Endothelial cell of umbilical vein (primary cell): ENCODE measurements at regions of chr5 and their contacts with region 1.

Region 1: GRCh38 chr5:32613050-32613672 is 27.8 kb downstream of the SUB1 start:
- DNase-seq: peak; percentile 85
- H3K4me3 ChIP-seq: no peak overlapping the region
- H3K27ac ChIP-seq: no peak overlapping the region
- H3K4me1 ChIP-seq: peaks cover 7% of the 10 kb centered on the region
- H3K27me3 ChIP-seq: no peaks in the 10 kb centered on the region
- CTCF ChIP-seq: peak; percentile 78 to 86
- POLR2A ChIP-seq: no peak

Region 2: DNA sequence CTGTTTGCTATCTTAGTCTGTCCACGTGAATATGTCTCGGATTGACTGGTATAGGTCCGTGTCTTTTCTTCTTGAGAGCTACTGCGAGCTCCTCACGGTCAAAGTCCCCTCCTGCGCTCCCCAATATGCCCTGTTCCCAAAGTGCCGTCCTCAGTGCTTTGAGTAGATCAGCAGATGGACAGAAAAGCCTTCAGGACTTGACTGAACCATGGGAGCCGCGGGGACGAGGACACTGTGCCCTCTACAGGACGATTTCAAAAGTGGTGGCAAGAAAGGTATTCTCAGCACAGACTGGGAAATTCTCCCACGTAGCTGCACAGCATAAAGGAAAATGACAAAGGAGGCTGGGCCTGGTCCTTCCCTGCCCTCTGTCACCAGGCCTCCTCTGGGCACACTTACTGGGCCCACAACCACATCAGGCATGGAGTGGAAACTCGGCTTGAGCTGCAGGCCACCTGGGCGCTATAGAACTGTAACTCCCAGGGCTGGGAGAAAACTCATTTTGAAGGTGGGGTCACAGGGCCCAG is 283.8 kb before region 1 on chr5:
- CTCF ChIA-PET with region 1: no interaction called
- POLR2A ChIA-PET with region 1: no interaction called
- dilution Hi-C with region 1: no loop called
- intact Hi-C with region 1: loop called (anchors 2 kb)
- DNase-seq: peak; percentile 80
- H3K4me3 ChIP-seq: no peak overlapping the region
- H3K27ac ChIP-seq: no peak overlapping the region
- H3K4me1 ChIP-seq: no peaks in the 10 kb centered on the region
- H3K27me3 ChIP-seq: no peaks in the 10 kb centered on the region
- CTCF ChIP-seq: peak; percentile 60 to 80
- POLR2A ChIP-seq: no peak

Region 3: GRCh38 chr5:32444431-32445286 is 168.5 kb before region 1 on chr5 and contains the start of gene ZFR:
- CTCF ChIA-PET with region 1: interaction called, 4 read pairs
- POLR2A ChIA-PET with region 1: no interaction called
- dilution Hi-C with region 1: no loop called
- intact Hi-C with region 1: loop called (anchors 1 kb)
- DNase-seq: peak; percentile 92
- H3K4me3 ChIP-seq: peak within 1 kb of the TSS; percentile 91 to 98 (median 93)
- H3K27ac ChIP-seq: peak within 1 kb of the TSS; percentile 84
- H3K4me1 ChIP-seq: peaks cover 24% of the 10 kb centered on the region
- H3K27me3 ChIP-seq: no peaks in the 10 kb centered on the region
- CTCF ChIP-seq: no peak
- POLR2A ChIP-seq: peak; percentile 85
- total RNA-seq, gene ZFR: 58.6 and 60.1 TPM in 2 replicates

Region 4: DNA sequence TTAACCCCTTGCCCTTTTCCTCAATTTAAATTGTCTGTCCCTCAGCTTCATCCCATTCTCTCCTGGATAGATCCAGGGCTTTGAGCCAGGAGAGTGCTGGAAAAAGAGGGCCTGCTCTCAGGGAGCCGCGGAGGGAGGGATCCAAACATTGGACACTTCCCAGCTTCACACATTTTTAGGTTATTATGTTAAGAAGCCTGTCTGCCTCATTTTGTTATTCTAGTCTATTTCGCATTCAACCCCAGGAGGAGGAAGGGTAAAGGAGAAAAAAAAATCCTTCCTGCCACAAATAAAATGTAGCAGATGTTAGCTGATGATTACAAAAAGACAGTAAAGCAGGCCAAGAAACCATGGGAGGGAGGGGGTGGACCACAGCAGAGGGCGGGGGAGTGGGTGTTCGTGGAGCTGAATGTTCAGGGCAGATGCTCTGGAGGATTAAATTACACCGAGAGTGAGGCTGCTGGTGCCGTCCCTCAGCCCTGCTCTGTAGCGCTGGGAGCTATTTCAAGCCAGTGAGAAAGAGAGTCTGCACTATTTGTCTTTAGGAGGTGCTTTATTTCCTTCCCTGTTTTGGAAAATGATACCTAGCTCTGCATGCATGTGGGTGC is 108.1 kb before region 1 on chr5:
- CTCF ChIA-PET with region 1: interaction called, 3 read pairs
- POLR2A ChIA-PET with region 1: no interaction called
- dilution Hi-C with region 1: no loop called
- intact Hi-C with region 1: loop called (anchors 5 kb)
- DNase-seq: peak; percentile 95
- H3K4me3 ChIP-seq: no peak overlapping the region
- H3K27ac ChIP-seq: no peak overlapping the region
- H3K4me1 ChIP-seq: peaks cover 14% of the 10 kb centered on the region
- H3K27me3 ChIP-seq: peaks cover 6 to 10% of the 10 kb centered on the region in 2 experiments
- CTCF ChIP-seq: no peak
- POLR2A ChIP-seq: no peak

Region 5: GRCh38 chr5:33379757-33380156 is 766.6 kb after region 1 on chr5:
- CTCF ChIA-PET with region 1: interaction called, 3 read pairs
- POLR2A ChIA-PET with region 1: no interaction called
- dilution Hi-C with region 1: no loop called
- intact Hi-C with region 1: loop called (anchors 1 kb)
- DNase-seq: peak; percentile 56
- H3K4me3 ChIP-seq: no peak overlapping the region
- H3K27ac ChIP-seq: no peak overlapping the region
- H3K4me1 ChIP-seq: no peaks in the 10 kb centered on the region
- H3K27me3 ChIP-seq: peaks cover 2 to 4% of the 10 kb centered on the region in 2 experiments
- CTCF ChIP-seq: peak; percentile 66 to 69
- POLR2A ChIP-seq: no peak

Region 6: GRCh38 chr5:33423018-33423630 is 810.0 kb after region 1 on chr5:
- CTCF ChIA-PET with region 1: interaction called, 3 read pairs
- POLR2A ChIA-PET with region 1: no interaction called
- dilution Hi-C with region 1: no loop called
- intact Hi-C with region 1: loop called (anchors 5 kb)
- DNase-seq: peak; percentile 66
- H3K4me3 ChIP-seq: no peak overlapping the region
- H3K27ac ChIP-seq: no peak overlapping the region
- H3K4me1 ChIP-seq: no peaks in the 10 kb centered on the region
- H3K27me3 ChIP-seq: peaks cover 0 to 2% of the 10 kb centered on the region in 2 experiments
- CTCF ChIP-seq: peak; percentile 11 to 17
- POLR2A ChIP-seq: no peak

Region 7: DNA sequence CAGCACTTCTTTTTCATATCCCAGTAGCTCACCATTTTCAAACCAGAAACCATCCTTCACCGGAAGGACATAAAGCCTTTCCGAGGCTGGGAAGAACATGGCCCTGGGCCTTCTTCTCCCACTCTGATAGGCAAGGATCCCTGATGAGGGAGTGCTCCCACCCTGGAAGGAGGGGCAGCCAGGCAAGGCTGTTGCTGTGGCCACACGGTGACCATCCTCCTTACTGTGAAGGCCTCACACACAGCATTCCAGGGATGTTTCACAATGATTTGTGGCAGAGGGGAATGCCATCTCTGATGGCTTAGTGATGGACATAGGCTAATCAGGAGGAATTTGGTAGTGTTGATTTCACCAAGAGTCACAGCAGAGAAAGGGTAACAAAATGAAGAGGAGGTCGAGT is 1148.0 kb after region 1 on chr5:
- CTCF ChIA-PET with region 1: no interaction called
- POLR2A ChIA-PET with region 1: no interaction called
- dilution Hi-C with region 1: no loop called
- intact Hi-C with region 1: no loop called
- DNase-seq: no peak
- H3K4me3 ChIP-seq: no peak overlapping the region
- H3K27ac ChIP-seq: no peak overlapping the region
- H3K4me1 ChIP-seq: no peaks in the 10 kb centered on the region
- H3K27me3 ChIP-seq: peaks cover 0 to 3% of the 10 kb centered on the region in 2 experiments
- CTCF ChIP-seq: no peak
- POLR2A ChIP-seq: no peak